HEK293 (cell line): ENCODE measurements at regions of chr1 and their contacts with region 1.

Region 1: DNA sequence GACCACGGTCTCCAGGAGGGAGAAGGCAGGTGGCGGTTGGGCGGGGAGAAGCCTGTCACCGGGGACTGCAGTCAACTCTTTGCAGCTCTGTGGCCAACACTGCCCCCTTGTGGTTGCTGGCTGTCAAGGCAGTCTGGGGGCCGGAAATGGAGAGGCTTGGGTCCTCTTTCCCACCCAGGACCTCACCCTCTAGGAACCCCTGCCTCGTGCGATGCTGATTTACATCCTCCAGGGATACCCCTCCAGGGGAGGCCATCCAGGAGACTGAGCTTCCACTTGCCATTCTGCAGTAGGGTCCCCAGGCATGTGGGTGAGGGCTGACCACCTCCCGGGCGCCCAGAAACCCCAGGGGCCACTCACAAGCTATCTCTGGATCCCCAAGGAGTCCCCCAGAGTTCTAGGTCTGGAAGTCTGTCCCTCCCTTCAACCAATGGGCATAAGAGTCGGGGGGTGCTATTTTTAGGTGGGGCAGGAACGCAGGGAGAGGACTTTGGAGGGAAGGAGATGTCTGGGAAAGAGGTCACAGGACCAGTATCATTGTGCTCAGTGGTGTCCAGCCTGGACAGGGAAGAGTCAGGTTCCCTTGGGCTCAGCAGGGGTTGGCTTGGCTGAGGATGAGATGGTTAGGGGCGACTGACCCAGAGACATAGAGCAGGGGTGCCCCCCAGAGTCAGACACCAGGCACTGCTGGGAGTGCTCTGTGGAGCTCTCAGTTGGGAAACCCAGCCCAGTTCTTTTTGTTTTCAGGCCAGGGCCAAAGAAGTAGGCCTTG is 7.1 kb upstream of the GPR61 start:
- H3K4me3 ChIP-seq: no peak overlapping the region
- H3K27ac ChIP-seq: no peak overlapping the region
- H3K4me1 ChIP-seq: no peaks in the 10 kb centered on the region
- CTCF ChIP-seq: peak; percentile 82

Region 2: DNA sequence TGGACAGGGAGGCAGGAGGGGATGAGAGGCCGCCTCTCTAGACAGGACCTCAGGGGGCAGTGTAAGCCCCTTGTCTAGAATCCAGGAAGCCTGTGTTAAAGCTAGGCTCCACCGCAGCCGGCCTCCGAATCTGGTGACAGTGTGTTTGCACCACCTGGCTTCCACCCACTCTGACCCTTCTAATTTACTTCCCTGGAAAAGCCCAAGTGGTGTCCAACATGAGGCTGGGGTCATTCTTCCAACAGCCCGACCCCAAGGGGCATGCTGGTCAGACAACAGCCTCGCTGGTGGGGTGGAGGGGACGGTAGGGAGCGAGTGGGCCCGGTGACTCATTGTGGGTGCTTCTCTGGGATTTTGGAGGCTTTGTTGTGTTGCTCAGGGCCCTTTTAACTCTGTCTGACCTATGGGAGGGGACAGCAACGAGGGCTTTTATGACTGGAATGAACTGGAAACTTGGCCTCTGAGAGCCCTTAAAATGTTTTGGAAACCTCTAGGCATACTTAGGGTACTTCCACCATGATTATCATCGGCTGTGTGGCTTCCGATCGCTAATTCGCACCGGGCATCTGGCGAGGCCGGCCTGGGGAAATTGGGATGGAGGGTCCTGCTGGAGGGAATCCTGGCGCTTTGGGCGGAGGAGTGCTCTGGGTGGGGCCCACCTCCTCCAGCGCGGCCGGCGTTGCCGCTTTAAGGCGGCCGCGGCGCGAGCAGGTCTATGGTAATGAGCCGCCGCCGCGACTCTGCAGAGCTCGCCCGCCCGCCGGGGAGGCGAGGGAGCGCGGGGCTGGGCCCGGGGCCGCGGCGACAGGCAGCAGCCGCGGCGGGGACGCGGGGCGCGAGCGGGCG is 283.5 kb before region 1 on chr1 and contains the start of gene CELSR2:
- CTCF ChIA-PET with region 1: interaction called, 11 read pairs
- POLR2A ChIA-PET with region 1: no interaction called
- H3K4me3 ChIP-seq: peak within 1 kb of the TSS; percentile 45
- H3K27ac ChIP-seq: peak within 1 kb of the TSS; percentile 65; the same call in 1 of the 2 replicates
- H3K4me1 ChIP-seq: peaks cover 5% of the 10 kb centered on the region; the same call in 1 of the 2 replicates
- CTCF ChIP-seq: no peak; the same call in 1 of the 2 replicates

Region 3: DNA sequence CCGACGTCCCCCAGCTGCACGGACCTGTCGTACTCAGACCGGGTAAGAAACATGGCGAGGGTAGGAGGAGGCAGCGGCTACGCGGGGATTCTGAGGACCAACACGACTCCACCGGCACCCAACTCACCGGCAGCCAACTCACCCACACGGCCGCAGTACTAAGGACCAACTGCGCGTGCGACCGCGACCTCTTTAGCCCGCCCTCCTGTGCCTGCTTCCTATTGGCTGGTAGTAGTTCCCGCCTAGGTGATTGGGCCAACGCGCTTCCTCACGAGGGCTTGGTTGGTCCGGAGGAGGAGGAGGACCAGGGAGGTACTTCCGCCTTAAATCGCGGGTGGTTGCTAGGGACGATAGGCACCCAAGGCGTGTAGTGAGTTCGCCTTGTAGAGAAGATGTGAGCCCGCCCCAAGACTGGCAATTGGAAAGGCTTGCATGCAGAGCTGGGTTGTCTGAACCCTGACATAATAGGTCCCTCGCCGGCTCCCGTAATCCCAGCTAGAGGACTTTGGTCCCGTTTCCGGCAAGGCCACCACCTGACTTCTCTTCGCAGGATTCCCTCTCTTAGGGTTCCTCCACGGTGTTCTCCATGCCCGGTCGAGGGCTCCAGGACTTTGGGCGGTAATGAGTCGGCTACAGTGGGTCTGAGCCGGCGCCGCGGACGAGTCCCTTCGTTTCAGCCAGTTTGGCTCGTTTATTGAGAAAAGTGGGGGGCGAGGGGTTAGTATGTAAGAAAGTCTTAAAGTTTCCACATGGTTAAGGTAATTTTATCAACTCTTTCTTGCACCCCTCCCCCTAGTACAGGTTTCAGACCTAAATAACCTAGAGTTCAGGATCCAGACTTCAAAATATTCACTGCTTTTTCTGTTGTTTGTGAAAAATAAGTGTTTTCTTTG is 106.0 kb before region 1 on chr1 and contains the start of gene PSMA5:
- CTCF ChIA-PET with region 1: interaction called, 11 read pairs
- POLR2A ChIA-PET with region 1: no interaction called
- H3K4me3 ChIP-seq: peak within 1 kb of the TSS; percentile 90
- H3K27ac ChIP-seq: peak within 1 kb of the TSS; percentile 59
- H3K4me1 ChIP-seq: no peaks in the 10 kb centered on the region
- CTCF ChIP-seq: no peak

Region 4: GRCh38 chr1:109493805-109494539 is 38.6 kb before region 1 on chr1 and contains the start of gene CYB561D1:
- CTCF ChIA-PET with region 1: interaction called, 1,152 read pairs
- POLR2A ChIA-PET with region 1: interaction called, 11 read pairs
- H3K4me3 ChIP-seq: peak within 1 kb of the TSS; percentile 95
- H3K27ac ChIP-seq: peak within 1 kb of the TSS; percentile 6; the same call in 1 of the 2 replicates
- H3K4me1 ChIP-seq: no peaks in the 10 kb centered on the region
- CTCF ChIP-seq: peak; percentile 97

Region 5: GRCh38 chr1:109620841-109621286 is 88.3 kb after region 1 on chr1:
- CTCF ChIA-PET with region 1: interaction called, 10 read pairs
- POLR2A ChIA-PET with region 1: no interaction called
- H3K4me3 ChIP-seq: peak overlapping the region; percentile 73
- H3K27ac ChIP-seq: peak overlapping the region; percentile 78; the same call in 1 of the 2 replicates
- H3K4me1 ChIP-seq: peaks cover 4% of the 10 kb centered on the region; the same call in 1 of the 2 replicates
- CTCF ChIP-seq: no peak